Activated CD8-positive, alpha-beta T cell treated with anti-CD3 and anti-CD28 coated beads, Interleukin-2, amount 10 ng/mL, durations not matched to agents 7 days and 5 days (primary cell): ENCODE measurements at regions of chr11 and their contacts with region 1.

Region 1: GRCh38 chr11:66113116-66113854 is 43.2 kb downstream of the PACS1 start:
- DNase-seq: no peak
- ATAC-seq: no peak
- H3K4me3 Mint-ChIP-seq: peak overlapping the region; percentile 50
- H3K27ac Mint-ChIP-seq: peak overlapping the region; percentile 80
- H3K4me1 Mint-ChIP-seq: peaks cover 89% of the 10 kb centered on the region
- H3K27me3 Mint-ChIP-seq: no peaks in the 10 kb centered on the region

Region 2: GRCh38 chr11:66045177-66045639 is 68.1 kb before region 1 on chr11:
- CTCF ChIA-PET with region 1: interaction called, 11 read pairs
- POLR2A ChIA-PET with region 1: no interaction called
- DNase-seq: peak; percentile 86
- ATAC-seq: peak; percentile 95
- H3K4me3 Mint-ChIP-seq: no peak overlapping the region
- H3K27ac Mint-ChIP-seq: no peak overlapping the region
- H3K4me1 Mint-ChIP-seq: peaks cover 14% of the 10 kb centered on the region
- H3K27me3 Mint-ChIP-seq: peaks cover 11% of the 10 kb centered on the region

Region 3: DNA sequence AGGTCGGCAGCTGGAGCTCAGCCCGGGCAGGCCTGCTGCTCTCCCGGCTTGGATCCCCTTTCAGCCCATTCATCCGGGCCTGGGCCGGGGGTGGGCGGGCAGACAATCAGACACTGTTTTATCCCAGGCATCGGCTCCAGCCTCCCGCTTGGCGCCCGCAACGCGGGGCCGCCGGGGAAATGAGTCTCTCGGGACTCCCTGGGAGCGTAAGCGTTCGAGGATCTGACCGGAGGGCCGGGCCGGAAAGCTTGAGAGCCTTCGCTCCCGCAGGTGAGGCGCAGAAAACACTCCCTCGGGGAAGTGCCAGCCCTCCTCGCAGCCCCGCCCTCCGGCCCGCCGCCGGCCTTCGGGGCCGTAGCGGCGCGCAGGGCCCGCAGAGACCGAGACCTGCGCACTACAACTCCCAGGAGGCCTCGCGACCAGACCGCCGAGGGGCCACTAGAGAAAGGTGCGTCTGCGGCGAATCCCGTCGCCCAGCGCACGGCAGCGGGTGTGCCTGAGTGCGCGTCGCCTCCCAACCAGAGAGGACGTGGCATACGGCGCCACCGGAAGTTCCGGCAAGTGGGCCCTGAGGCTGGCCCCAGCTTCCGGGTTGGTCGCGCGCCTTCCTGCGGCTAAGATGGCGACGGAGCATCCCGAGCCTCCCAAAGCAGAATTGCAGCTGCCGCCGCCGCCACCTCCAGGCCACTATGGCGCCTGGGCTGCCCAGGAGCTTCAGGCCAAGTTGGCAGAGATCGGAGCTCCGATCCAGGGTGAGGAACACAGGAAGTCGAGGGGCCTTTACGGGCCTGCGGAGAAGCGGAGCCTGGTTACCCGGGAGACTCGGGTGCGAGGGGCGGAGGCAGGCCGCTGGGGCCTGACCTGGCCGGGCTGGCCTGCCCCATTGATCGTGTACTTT is 61.3 kb before region 1 on chr11 and contains the start of gene SF3B2:
- CTCF ChIA-PET with region 1: interaction called, 3 read pairs
- POLR2A ChIA-PET with region 1: interaction called, 10 read pairs
- DNase-seq: peak; percentile 98
- ATAC-seq: peak; percentile 98
- H3K4me3 Mint-ChIP-seq: peak within 1 kb of the TSS; percentile 100
- H3K27ac Mint-ChIP-seq: peak within 1 kb of the TSS; percentile 99
- H3K4me1 Mint-ChIP-seq: peaks cover 37% of the 10 kb centered on the region
- H3K27me3 Mint-ChIP-seq: peaks cover 11% of the 10 kb centered on the region
- total RNA-seq, gene SF3B2: 241 to 253 TPM

Region 4: GRCh38 chr11:66081505-66081904 is 31.8 kb before region 1 on chr11:
- CTCF ChIA-PET with region 1: interaction called, 21 read pairs
- POLR2A ChIA-PET with region 1: interaction called, 7 read pairs
- DNase-seq: peak; percentile 89
- ATAC-seq: peak; percentile 94
- H3K4me3 Mint-ChIP-seq: peak overlapping the region; percentile 84
- H3K27ac Mint-ChIP-seq: peak overlapping the region; percentile 98
- H3K4me1 Mint-ChIP-seq: peaks cover 67% of the 10 kb centered on the region
- H3K27me3 Mint-ChIP-seq: no peaks in the 10 kb centered on the region

Region 5: GRCh38 chr11:66100272-66101065 is 12.8 kb before region 1 on chr11:
- CTCF ChIA-PET with region 1: interaction called, 18 read pairs
- POLR2A ChIA-PET with region 1: interaction called, 5 read pairs
- DNase-seq: peak; percentile 84
- ATAC-seq: peak; percentile 97
- H3K4me3 Mint-ChIP-seq: peak overlapping the region; percentile 77
- H3K27ac Mint-ChIP-seq: peak overlapping the region; percentile 95
- H3K4me1 Mint-ChIP-seq: peaks cover 45% of the 10 kb centered on the region
- H3K27me3 Mint-ChIP-seq: no peaks in the 10 kb centered on the region

Region 6: DNA sequence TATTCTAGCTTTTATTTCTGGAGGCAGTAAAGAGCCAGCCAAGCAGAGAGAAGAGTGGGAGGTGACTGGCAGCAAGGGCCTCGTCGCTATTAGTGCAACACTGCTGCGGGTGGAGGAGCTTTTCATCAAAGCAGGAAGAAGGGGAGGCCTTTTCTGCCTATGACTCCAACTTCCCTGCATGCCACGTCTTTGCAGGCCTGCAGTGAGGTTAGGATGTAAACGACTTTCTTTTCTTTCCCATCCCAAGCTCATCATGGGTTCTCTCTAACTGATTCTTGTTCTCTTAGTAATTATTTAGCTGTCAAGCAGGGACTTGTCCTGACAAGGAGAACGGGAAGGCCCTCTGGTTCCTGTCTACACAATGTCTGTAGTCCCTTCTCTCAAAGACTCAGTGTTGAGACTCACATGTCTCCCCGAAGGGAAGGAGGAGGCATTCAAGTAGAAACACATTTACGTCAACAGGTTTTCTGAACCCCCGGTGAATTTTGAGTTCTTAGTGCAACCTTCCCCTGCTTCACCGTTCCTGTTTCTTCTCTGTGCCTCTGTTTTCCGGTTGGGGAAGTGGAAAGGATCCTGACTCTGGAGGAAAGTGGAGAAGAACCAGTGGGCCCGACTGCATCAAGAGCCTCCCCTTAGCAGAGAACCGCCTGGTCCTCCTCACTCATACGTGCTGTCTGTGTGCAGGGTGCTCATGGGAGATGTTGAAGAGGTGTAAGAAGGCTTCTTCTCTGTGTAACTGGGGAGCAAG is 13.7 kb after region 1 on chr11:
- CTCF ChIA-PET with region 1: interaction called, 42 read pairs
- POLR2A ChIA-PET with region 1: interaction called, 8 read pairs
- DNase-seq: peak; percentile 73
- ATAC-seq: peak; percentile 88
- H3K4me3 Mint-ChIP-seq: peak overlapping the region; percentile 51
- H3K27ac Mint-ChIP-seq: peak overlapping the region; percentile 91
- H3K4me1 Mint-ChIP-seq: peaks cover 58% of the 10 kb centered on the region
- H3K27me3 Mint-ChIP-seq: no peaks in the 10 kb centered on the region

Region 7: GRCh38 chr11:66136752-66137123 is 23.5 kb after region 1 on chr11:
- CTCF ChIA-PET with region 1: interaction called, 12 read pairs
- POLR2A ChIA-PET with region 1: interaction called, 4 read pairs
- DNase-seq: no peak
- ATAC-seq: no peak
- H3K4me3 Mint-ChIP-seq: no peak overlapping the region
- H3K27ac Mint-ChIP-seq: no peak overlapping the region
- H3K4me1 Mint-ChIP-seq: peaks cover 34% of the 10 kb centered on the region
- H3K27me3 Mint-ChIP-seq: no peaks in the 10 kb centered on the region

Region 8: GRCh38 chr11:66150140-66150539 is 36.9 kb after region 1 on chr11:
- CTCF ChIA-PET with region 1: no interaction called
- POLR2A ChIA-PET with region 1: no interaction called
- DNase-seq: no peak
- ATAC-seq: no peak
- H3K4me3 Mint-ChIP-seq: no peak overlapping the region
- H3K27ac Mint-ChIP-seq: no peak overlapping the region
- H3K4me1 Mint-ChIP-seq: peaks cover 6% of the 10 kb centered on the region
- H3K27me3 Mint-ChIP-seq: no peaks in the 10 kb centered on the region